ENCODE measurements at regions of chr5 and their contacts with region 1.

Region 1: GRCh38 chr5:120803282-120803681 is 339.2 kb downstream of the PRR16 start:
- DNase-seq: peak; percentile 13
- H3K4me3 ChIP-seq: no peak overlapping the region
- H3K27ac ChIP-seq: no peak overlapping the region
- H3K4me1 ChIP-seq: no peaks in the 10 kb centered on the region
- H3K27me3 ChIP-seq: no peaks in the 10 kb centered on the region
- CTCF ChIP-seq: peak; percentile 54; the same call in 1 of the 2 replicates

Region 2: GRCh38 chr5:120655828-120656435 is 147.3 kb before region 1 on chr5:
- CTCF ChIA-PET with region 1: no interaction called
- POLR2A ChIA-PET with region 1: no interaction called
- intact Hi-C with region 1: loop called (anchors 2 kb)
- DNase-seq: peak; percentile 60
- H3K4me3 ChIP-seq: no peak overlapping the region
- H3K27ac ChIP-seq: no peak overlapping the region
- H3K4me1 ChIP-seq: no peaks in the 10 kb centered on the region
- H3K27me3 ChIP-seq: no peaks in the 10 kb centered on the region
- CTCF ChIP-seq: peak; percentile 80

Region 3: DNA sequence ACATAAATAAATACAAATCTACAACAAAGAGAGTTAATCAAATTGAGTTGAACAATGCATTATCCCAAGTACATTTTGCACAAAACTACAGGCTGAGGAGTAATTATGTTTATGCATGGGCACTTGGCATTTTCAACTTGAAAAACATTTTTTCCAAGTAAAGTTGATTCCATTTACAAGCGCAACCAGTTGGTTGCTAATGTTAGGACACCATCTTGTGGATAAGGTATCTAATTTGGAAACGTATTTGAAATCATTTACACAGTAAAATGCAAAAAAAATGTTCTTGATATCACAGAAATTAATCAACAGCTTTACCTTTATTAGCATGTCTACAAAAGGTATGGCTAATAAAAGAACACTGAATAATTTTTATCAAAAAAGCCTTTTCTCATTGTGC is 1067.2 kb after region 1 on chr5:
- CTCF ChIA-PET with region 1: no interaction called
- POLR2A ChIA-PET with region 1: no interaction called
- intact Hi-C with region 1: loop called (anchors 10 kb)
- DNase-seq: peak; percentile 16
- H3K4me3 ChIP-seq: no peak overlapping the region
- H3K27ac ChIP-seq: no peak overlapping the region
- H3K4me1 ChIP-seq: no peaks in the 10 kb centered on the region
- H3K27me3 ChIP-seq: peaks cover 10% of the 10 kb centered on the region
- CTCF ChIP-seq: peak; percentile 35; the same call in 1 of the 2 replicates

Region 4: GRCh38 chr5:121949867-121950266 is 1146.6 kb after region 1 on chr5:
- CTCF ChIA-PET with region 1: no interaction called
- POLR2A ChIA-PET with region 1: no interaction called
- intact Hi-C with region 1: loop called (anchors 5 kb)
- DNase-seq: peak; percentile 69
- H3K4me3 ChIP-seq: no peak overlapping the region
- H3K27ac ChIP-seq: no peak overlapping the region
- H3K4me1 ChIP-seq: no peaks in the 10 kb centered on the region
- H3K27me3 ChIP-seq: no peaks in the 10 kb centered on the region
- CTCF ChIP-seq: peak; percentile 75